CD8-positive, alpha-beta T cell (primary cell): ENCODE measurements at regions of chr15 and their contacts with region 1.

Region 1: DNA sequence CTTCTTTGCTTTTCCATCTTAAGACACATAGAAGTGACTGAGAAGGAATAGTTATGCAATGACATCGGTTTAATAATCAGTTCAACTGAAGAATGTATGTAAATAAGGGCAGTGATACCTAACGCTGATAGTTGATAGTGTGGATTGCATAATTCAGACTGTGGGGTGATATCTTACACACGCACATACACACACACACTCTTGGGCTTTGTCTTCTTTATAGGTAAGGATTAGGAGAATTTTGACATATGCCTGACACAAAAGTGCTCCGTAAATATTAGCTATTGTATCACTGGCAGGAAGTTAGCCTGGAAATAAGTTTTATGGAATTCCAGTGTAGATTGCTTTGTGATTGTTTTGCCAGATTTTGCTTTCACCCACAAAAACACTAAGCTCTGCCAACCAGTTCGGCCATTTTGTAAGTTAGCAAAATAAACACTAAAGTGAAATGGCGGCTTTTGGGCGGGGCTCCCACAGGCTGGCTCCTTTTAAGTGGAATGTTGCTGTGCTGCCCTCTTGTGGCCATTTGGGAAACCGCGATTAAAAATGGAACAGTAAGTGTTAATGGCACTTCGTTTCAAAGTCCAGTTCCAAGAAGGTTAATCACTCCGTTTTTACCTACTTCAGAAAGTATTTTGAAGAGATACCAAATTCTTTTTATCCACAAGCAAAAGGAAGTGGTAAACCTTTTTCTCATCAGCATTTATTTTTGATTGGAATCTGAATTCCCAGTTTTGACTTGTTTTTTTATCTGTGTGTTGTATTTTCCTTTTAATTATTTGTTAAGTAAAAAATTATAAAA is 17.7 kb downstream of the CHD2 start:
- DNase-seq: peak; percentile 85 to 94 (median 91)
- ATAC-seq: peak; percentile 17
- H3K4me3 ChIP-seq: no peak overlapping the region
- H3K4me3 Mint-ChIP-seq: peak overlapping the region; percentile 56
- H3K27ac ChIP-seq: peak overlapping the region; percentile 22 to 96
- H3K27ac Mint-ChIP-seq: peak overlapping the region; percentile 94
- H3K4me1 ChIP-seq: peaks cover 76% of the 10 kb centered on the region
- H3K4me1 Mint-ChIP-seq: peaks cover 86% of the 10 kb centered on the region
- H3K27me3 ChIP-seq: no peaks in the 10 kb centered on the region
- H3K27me3 Mint-ChIP-seq: no peaks in the 10 kb centered on the region
- CTCF ChIP-seq: peak; percentile 95

Region 2: DNA sequence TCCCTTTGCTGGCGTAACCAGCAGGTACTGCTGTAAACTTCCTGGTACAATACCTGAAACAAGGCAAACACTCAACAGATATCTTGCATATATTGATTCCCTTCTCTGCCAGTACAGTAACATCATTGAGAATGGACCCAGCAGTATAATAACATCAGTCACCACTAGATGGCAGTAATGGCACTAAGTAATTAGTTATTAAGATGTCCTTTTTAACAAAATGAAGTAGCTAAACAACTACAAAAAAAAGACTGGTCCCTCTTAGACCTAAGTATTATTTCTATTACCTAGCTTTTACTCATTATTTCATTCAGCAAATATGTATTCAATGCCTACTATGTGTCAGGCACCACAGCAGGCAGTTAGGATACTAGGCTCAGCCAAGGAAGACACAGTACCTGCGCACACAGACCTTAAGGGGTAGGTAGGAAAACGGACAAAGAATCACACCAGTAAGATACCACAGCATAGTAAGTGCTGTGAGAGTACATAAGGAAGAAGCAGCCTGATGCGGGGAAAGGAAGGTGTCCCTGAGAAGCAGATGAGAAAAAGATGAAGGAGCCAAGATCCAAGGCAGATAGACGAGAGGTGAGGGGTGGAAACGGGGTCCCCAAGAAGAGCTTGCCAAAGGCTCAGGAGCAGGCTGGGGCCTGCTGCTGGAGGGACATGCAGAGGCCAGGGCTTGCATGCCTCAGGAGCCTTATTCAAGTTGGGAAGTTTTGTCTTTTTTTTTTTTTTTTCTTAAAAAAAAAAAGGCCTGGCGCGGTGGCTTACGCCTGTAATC is 120.4 kb before region 1 on chr15:
- CTCF ChIA-PET with region 1: interaction called, 153 read pairs
- POLR2A ChIA-PET with region 1: interaction called, 8 read pairs
- intact Hi-C with region 1: loop called (anchors 1 kb)
- DNase-seq: peak in 4 of 9 experiments; percentile 22 to 87 (median 67)
- ATAC-seq: peak; percentile 95
- H3K4me3 ChIP-seq: no peak overlapping the region
- H3K4me3 Mint-ChIP-seq: no peak overlapping the region
- H3K27ac ChIP-seq: no peak overlapping the region
- H3K27ac Mint-ChIP-seq: peak overlapping the region; percentile 65
- H3K4me1 ChIP-seq: peaks cover 3% of the 10 kb centered on the region
- H3K4me1 Mint-ChIP-seq: peaks cover 6% of the 10 kb centered on the region
- H3K27me3 ChIP-seq: no peaks in the 10 kb centered on the region
- H3K27me3 Mint-ChIP-seq: no peaks in the 10 kb centered on the region
- CTCF ChIP-seq: peak; percentile 74

Region 3: DNA sequence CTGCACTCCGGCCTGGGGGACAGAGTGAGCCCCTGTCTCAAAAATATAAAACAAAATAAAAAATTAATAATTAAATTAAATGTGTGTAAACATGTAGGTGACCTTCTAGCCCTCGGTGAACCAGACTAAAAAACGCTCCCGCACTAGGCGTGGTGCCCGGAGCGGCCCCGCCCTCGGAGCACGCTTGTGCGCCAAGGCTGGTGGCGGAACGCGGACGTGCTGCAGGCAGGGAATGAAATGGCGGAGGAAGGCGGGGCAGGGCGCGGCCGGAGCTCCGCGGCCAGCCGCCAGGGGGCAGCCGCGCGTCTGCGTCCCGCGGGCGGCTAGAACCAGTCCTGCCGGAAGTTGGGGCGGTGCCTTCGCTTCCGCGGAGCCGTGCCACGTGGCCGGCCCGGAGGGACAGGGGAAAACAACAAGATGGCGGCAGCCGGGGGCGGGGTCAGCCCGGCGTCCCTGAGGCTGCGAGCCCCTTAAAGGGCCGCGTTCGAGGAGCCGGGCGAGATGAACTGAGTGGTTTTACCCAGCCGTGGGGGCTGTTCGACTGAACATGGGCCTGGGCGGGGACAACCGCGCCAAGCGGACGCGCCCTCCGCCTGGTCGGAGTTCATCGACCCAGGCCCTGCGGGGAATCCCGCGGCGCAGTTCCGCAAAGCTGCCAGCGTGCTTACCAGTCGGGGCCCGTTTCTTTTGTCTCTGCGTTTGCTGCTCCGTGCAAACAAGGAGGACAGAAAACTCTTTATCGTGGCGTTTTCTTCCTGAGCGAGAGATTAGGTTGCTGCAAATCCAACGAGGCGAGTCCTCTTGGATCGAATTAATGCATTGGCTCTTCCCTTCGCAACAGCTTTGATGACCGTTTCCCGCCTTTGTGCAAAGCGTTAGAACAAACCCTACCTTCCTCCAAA is 108.6 kb before region 1 on chr15:
- CTCF ChIA-PET with region 1: interaction called, 30 read pairs
- POLR2A ChIA-PET with region 1: interaction called, 104 read pairs
- intact Hi-C with region 1: loop called (anchors 1 kb)
- DNase-seq: peak; percentile 97 to 100 (median 99)
- ATAC-seq: peak; percentile 76
- H3K4me3 ChIP-seq: peak overlapping the region; percentile 71 to 87
- H3K4me3 Mint-ChIP-seq: peak overlapping the region; percentile 80
- H3K27ac ChIP-seq: peak overlapping the region; percentile 94 to 98
- H3K27ac Mint-ChIP-seq: peak overlapping the region; percentile 95
- H3K4me1 ChIP-seq: peaks cover 47% of the 10 kb centered on the region
- H3K4me1 Mint-ChIP-seq: peaks cover 45% of the 10 kb centered on the region
- H3K27me3 ChIP-seq: no peaks in the 10 kb centered on the region
- H3K27me3 Mint-ChIP-seq: no peaks in the 10 kb centered on the region
- CTCF ChIP-seq: peak; percentile 92

Region 4: DNA sequence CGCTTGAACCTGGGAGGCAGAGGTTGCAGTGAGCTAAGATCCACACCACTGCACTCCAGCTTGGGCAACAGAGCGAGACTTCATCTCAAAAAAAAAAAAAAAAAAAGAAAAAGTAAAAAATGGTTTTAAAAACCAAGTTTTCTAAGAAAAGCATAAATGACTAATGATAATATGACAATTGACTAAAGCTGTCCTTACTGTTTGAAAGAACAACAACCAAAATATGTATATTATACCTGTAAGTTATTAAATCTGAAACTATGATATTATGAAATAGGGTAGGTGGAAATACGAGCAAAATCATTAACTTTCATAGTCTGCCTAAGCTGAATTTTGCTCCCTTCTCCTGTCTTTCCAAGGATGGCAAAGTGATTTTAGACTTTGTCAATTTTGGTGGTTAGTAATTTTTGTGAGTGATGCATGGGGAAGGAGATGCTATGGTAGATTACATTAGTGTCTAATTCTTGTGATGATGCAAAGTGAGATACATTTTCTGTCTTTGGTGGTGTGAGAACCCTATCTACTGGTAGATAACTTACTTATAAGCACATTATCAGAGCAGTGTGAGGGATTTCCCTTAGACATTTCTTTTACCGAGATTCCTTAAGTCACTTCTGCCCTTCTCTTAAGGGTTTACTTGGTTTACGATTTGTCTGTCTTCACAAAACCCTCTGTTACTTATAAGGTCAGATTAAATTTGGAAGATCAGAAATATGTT is 28.3 kb before region 1 on chr15:
- CTCF ChIA-PET with region 1: interaction called, 13 read pairs
- POLR2A ChIA-PET with region 1: interaction called, 85 read pairs
- intact Hi-C with region 1: no loop called
- DNase-seq: peak in 1 of 9 experiments; percentile 47
- ATAC-seq: peak; percentile 33
- H3K4me3 ChIP-seq: no peak overlapping the region
- H3K4me3 Mint-ChIP-seq: peak overlapping the region; percentile 80
- H3K27ac ChIP-seq: peak overlapping the region in 1 of 2 experiments; percentile 32
- H3K27ac Mint-ChIP-seq: peak overlapping the region; percentile 90
- H3K4me1 ChIP-seq: peaks cover 77% of the 10 kb centered on the region
- H3K4me1 Mint-ChIP-seq: peaks cover 76% of the 10 kb centered on the region
- H3K27me3 ChIP-seq: no peaks in the 10 kb centered on the region
- H3K27me3 Mint-ChIP-seq: no peaks in the 10 kb centered on the region
- CTCF ChIP-seq: no peak

Region 5: DNA sequence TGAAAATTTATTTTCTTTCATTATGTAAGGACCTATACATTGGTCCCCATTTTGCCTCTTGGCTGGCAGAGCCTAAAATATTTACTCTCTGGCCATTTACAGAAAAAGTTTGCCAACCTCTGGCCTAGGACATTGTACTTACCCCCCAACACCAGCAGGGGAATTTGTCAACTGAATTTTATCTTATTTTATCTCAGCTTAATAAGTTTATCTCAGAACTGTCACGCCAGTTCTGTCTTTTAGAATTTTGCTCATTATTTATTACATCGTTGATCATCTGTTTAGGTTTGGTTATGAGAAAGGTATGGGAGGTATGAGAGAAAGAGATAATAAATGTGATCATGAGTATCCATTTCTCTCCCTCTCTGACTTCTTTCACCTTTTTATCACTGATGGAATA is 20.6 kb after region 1 on chr15:
- CTCF ChIA-PET with region 1: interaction called, 5 read pairs
- POLR2A ChIA-PET with region 1: no interaction called
- intact Hi-C with region 1: loop called in 1 of 2 experiments (anchors 2 kb)
- DNase-seq: no peak
- ATAC-seq: peak; percentile 36
- H3K4me3 ChIP-seq: no peak overlapping the region
- H3K4me3 Mint-ChIP-seq: no peak overlapping the region
- H3K27ac ChIP-seq: no peak overlapping the region
- H3K27ac Mint-ChIP-seq: no peak overlapping the region
- H3K4me1 ChIP-seq: peaks cover 21% of the 10 kb centered on the region
- H3K4me1 Mint-ChIP-seq: peaks cover 49% of the 10 kb centered on the region
- H3K27me3 ChIP-seq: no peaks in the 10 kb centered on the region
- H3K27me3 Mint-ChIP-seq: no peaks in the 10 kb centered on the region
- CTCF ChIP-seq: peak; percentile 40